ENCODE measurements at regions of chr6 and their contacts with region 1.

Region 1: DNA sequence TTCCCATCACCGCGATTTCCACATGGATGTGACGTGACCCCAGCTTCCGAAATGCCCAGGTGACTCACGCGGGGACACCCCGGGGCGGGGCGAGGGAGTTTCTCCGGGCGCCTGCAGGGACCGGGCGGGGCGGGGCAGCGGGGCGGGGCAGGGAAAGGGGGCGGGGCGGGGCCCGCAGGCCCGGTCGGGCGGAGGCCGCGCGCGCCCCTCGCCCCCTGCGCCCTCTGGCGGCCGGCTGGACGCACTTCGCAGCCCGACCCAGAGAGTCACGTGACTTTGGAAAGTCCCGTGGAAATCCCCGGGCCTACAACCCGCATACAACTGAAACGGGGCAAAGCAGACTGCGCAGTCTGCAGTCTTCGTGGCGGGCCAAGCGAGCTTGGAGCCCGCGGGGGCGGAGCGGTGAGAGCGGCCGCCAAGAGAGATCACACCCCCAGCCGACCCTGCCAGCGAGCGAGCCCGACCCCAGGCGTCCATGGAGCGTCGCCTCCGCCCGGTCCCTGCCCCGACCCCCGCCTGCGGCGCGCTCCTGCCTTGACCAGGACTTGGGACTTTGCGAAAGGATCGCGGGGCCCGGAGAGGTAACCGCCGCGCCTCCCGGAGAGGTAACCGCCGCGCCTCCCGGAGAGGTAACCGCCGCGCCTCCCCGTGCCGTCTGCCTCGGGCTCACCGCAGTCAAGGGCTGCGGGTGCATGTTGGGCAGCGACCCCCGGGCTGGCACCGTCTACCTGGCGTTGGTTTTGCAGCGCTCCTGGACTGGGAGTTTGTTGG is at the start of gene TNFAIP3:
- DNase-seq: peak; percentile 96 to 98 (median 98)
- H3K4me3 ChIP-seq: peak within 1 kb of the TSS; percentile 76 to 95 (median 87)
- H3K27ac ChIP-seq: peak within 1 kb of the TSS; percentile 85 to 92
- H3K4me1 ChIP-seq: peaks cover 12 to 54% (median 37%) of the 10 kb centered on the region in 4 experiments
- H3K27me3 ChIP-seq: no peaks in the 10 kb centered on the region

Region 2: DNA sequence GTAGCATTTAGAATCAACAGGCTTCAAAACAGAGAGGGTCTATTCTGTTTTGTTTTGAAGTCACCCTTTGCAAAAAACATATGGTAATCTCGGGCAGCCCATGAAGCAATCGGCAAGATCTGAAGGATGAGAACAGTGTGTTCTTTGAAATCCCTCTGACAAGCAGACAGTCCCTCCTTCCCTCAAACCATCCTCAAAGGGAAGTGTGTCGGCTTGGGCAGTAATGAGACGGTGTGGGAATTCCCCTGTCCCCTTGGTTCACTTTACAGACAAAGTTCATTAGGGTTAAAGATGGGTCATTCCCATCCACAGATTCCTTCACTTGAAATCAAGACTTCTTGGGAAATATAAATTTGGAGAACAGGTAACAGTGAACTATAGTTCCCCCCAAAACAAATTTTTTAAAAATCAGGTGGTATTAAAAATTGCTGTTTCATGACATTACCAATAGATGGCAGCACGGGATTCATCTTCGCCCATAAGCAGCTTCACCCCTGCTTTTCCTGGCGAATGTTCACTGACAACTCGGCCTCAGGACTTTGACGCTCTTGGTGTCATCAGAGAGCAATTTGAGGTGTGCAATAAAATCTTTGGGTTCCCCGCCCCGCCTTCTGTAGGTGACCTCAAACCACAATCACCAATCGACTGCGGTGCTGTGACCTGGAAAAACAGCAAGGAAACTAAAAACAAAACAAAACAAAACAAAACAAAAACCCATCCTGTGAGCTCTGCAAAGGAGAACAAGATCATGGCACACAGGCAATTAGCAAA is 159.3 kb before region 1 on chr6:
- CTCF ChIA-PET with region 1: interaction called, 16 read pairs
- POLR2A ChIA-PET with region 1: interaction called, 9 read pairs
- DNase-seq: peak; percentile 86 to 92 (median 89)
- H3K4me3 ChIP-seq: peak overlapping the region in 1 of 7 experiments; percentile 36
- H3K27ac ChIP-seq: no peak overlapping the region
- H3K4me1 ChIP-seq: peaks cover 0 to 16% (median 8%) of the 10 kb centered on the region in 4 experiments
- H3K27me3 ChIP-seq: no peaks in the 10 kb centered on the region

Region 3: DNA sequence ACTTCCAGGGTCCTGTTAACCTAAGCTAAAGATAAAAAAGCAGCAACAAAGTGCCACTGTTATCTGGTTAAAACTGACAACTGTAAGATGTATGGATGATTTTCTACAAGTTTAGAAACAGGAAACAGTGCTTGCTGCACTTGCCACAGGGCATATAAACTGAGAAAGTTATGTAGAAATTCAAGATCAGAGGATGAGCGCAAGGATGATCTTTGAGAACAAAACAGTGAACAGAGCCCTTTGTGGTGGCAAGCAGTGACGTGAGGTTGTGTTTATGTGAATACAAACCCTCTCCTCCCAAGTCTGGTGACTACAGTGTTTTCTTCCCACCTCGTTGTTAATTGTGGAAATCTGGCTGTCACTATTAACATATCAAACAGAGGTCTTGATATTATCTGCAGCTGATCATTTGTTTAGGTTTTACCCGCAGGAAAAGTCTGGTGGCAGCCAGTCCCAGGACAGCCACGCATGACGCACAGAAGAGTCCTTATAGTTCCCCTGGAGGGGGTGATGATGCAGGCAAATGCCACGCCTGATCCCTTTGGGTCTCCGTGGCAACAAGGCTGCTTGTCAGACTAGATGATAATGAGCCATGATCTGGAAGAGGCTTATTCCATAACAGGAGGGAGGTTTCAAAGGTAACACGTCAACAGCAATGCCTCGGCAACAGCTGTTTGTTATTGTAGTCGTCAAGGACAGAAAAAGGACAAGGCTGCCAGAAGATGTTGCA is 43.1 kb before region 1 on chr6:
- CTCF ChIA-PET with region 1: interaction called, 12 read pairs
- POLR2A ChIA-PET with region 1: no interaction called
- DNase-seq: peak; percentile 92 to 94 (median 92)
- H3K4me3 ChIP-seq: no peak overlapping the region
- H3K27ac ChIP-seq: peak overlapping the region; percentile 81 to 86
- H3K4me1 ChIP-seq: peaks cover 18 to 45% (median 39%) of the 10 kb centered on the region in 4 experiments
- H3K27me3 ChIP-seq: no peaks in the 10 kb centered on the region

Region 4: GRCh38 chr6:137927777-137928218 is 60.7 kb after region 1 on chr6:
- CTCF ChIA-PET with region 1: interaction called, 18 read pairs
- POLR2A ChIA-PET with region 1: interaction called, 6 read pairs
- DNase-seq: peak; percentile 82 to 97 (median 96)
- H3K4me3 ChIP-seq: peak overlapping the region in 4 of 7 experiments; percentile 6 to 61 (median 46)
- H3K27ac ChIP-seq: peak overlapping the region; percentile 56 to 70
- H3K4me1 ChIP-seq: peaks cover 21 to 47% (median 43%) of the 10 kb centered on the region in 4 experiments
- H3K27me3 ChIP-seq: no peaks in the 10 kb centered on the region

Region 5: GRCh38 chr6:137944793-137945498 is 77.8 kb after region 1 on chr6:
- CTCF ChIA-PET with region 1: interaction called, 24 read pairs
- POLR2A ChIA-PET with region 1: no interaction called
- DNase-seq: peak; percentile 49 to 73 (median 67)
- H3K4me3 ChIP-seq: no peak overlapping the region
- H3K27ac ChIP-seq: no peak overlapping the region
- H3K4me1 ChIP-seq: peaks cover 0 to 8% (median 3%) of the 10 kb centered on the region in 4 experiments
- H3K27me3 ChIP-seq: peaks cover 0 to 2% (median 0%) of the 10 kb centered on the region in 5 experiments

Region 6: GRCh38 chr6:138188278-138188941 is 321.3 kb after region 1 on chr6:
- CTCF ChIA-PET with region 1: no interaction called
- POLR2A ChIA-PET with region 1: no interaction called
- DNase-seq: no peak
- H3K4me3 ChIP-seq: no peak overlapping the region
- H3K27ac ChIP-seq: no peak overlapping the region
- H3K4me1 ChIP-seq: no peaks in the 10 kb centered on the region
- H3K27me3 ChIP-seq: peaks cover 0 to 5% (median 0%) of the 10 kb centered on the region in 5 experiments

Measured in common myeloid progenitor, CD34-positive (primary cell).